Activated T-helper 2 cell treated with anti-CD3 and anti-CD28 coated beads, Interferon-gamma antibody, Interleukin-2, Interleukin-4, amounts not matched to agents 10 μg/mL and 5 μg/mL and 100 μg/mL, durations not matched to agents 14 hours and 24 hours and 36 hours (primary cell): ENCODE measurements at regions of chr11 and their contacts with region 1.

Region 1: GRCh38 chr11:9757809-9758636 is 94.1 kb downstream of the SWAP70 start:
- DNase-seq: peak; percentile 87
- H3K4me3 Mint-ChIP-seq: peak overlapping the region; percentile 73
- H3K27ac Mint-ChIP-seq: peak overlapping the region; percentile 89
- H3K4me1 Mint-ChIP-seq: peaks cover 40% of the 10 kb centered on the region
- H3K27me3 Mint-ChIP-seq: no peaks in the 10 kb centered on the region

Region 2: DNA sequence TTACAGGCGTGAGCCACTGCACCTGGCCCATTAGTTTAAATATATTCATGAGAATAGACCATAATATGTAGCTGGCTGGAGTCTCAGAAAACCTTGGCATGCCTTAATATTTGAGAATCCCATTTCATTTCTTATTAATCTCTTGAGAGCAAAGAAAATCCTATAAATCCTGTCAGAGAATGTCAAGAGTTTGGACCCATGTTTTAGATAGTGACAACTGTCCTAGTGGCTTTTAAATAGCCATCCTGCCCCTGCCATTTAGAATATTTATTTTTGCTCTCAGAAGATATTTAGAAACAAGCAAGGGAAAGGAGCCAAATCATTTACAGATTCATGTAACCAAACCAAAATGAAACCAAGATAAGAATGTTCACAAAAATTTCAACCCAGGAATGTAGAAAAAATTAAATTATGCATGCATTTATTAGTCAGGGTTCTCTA is 13.1 kb after region 1 on chr11:
- intact Hi-C with region 1: no loop called
- DNase-seq: no peak
- H3K4me3 Mint-ChIP-seq: no peak overlapping the region
- H3K27ac Mint-ChIP-seq: no peak overlapping the region
- H3K4me1 Mint-ChIP-seq: peaks cover 9% of the 10 kb centered on the region
- H3K27me3 Mint-ChIP-seq: no peaks in the 10 kb centered on the region

Region 3: GRCh38 chr11:9840460-9841004 is 82.5 kb after region 1 on chr11:
- intact Hi-C with region 1: loop called (anchors 1 kb)
- DNase-seq: no peak
- H3K4me3 Mint-ChIP-seq: no peak overlapping the region
- H3K27ac Mint-ChIP-seq: peak overlapping the region; percentile 3
- H3K4me1 Mint-ChIP-seq: peaks cover 38% of the 10 kb centered on the region
- H3K27me3 Mint-ChIP-seq: no peaks in the 10 kb centered on the region

Region 4: GRCh38 chr11:9861860-9862725 is 104.1 kb after region 1 on chr11:
- intact Hi-C with region 1: loop called (anchors 1 kb)
- DNase-seq: peak; percentile 20
- H3K4me3 Mint-ChIP-seq: no peak overlapping the region
- H3K27ac Mint-ChIP-seq: no peak overlapping the region
- H3K4me1 Mint-ChIP-seq: peaks cover 32% of the 10 kb centered on the region
- H3K27me3 Mint-ChIP-seq: peaks cover 4% of the 10 kb centered on the region

Region 5: GRCh38 chr11:9972989-9973388 is 215.0 kb after region 1 on chr11:
- intact Hi-C with region 1: loop called (anchors 1 kb)
- DNase-seq: no peak
- H3K4me3 Mint-ChIP-seq: no peak overlapping the region
- H3K27ac Mint-ChIP-seq: no peak overlapping the region
- H3K4me1 Mint-ChIP-seq: peaks cover 2% of the 10 kb centered on the region
- H3K27me3 Mint-ChIP-seq: no peaks in the 10 kb centered on the region

Region 6: DNA sequence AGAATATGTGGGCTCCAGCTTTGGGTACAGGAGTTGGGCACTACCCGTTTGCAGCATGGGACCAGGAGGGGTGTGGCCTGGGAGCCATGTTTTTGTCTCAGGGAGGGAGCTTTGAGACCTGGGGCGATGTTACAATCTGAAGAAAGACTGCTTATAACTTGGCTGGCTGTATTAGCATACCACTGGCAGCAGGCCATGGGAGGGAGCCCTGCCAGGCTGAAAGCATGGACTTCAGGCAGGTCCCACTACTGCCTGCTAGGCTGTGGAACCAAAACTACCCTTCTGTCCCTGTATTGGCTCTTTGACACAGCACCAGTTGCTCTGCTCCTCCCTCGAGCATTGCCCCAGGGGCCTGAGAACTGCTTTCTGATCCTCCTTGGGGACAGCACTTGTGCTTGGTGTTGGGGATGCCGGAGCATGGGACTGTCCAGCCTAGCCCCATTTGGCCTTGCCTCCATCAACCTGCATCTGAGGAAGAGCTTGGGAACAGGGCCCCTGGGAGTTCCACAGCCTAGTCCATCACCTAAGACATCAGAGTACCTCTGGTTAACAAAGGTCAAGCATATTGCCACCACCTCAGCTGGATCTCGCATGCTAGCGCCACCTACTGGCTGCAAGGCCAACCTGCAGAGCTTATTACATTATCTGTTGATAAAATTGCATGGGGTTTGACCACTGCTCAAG is 318.6 kb after region 1 on chr11:
- intact Hi-C with region 1: loop called (anchors 2 kb)
- DNase-seq: peak; percentile 12
- H3K4me3 Mint-ChIP-seq: no peak overlapping the region
- H3K27ac Mint-ChIP-seq: no peak overlapping the region
- H3K4me1 Mint-ChIP-seq: no peaks in the 10 kb centered on the region
- H3K27me3 Mint-ChIP-seq: peaks cover 2% of the 10 kb centered on the region

Region 7: GRCh38 chr11:10208131-10208575 is 450.1 kb after region 1 on chr11:
- intact Hi-C with region 1: loop called (anchors 5 kb)
- DNase-seq: no peak
- H3K4me3 Mint-ChIP-seq: no peak overlapping the region
- H3K27ac Mint-ChIP-seq: no peak overlapping the region
- H3K4me1 Mint-ChIP-seq: no peaks in the 10 kb centered on the region
- H3K27me3 Mint-ChIP-seq: peaks cover 21% of the 10 kb centered on the region

Region 8: GRCh38 chr11:10322830-10323792 is 565.1 kb after region 1 on chr11:
- intact Hi-C with region 1: loop called (anchors 1 kb)
- DNase-seq: peak; percentile 31
- H3K4me3 Mint-ChIP-seq: no peak overlapping the region
- H3K27ac Mint-ChIP-seq: peak overlapping the region; percentile 86
- H3K4me1 Mint-ChIP-seq: peaks cover 16% of the 10 kb centered on the region
- H3K27me3 Mint-ChIP-seq: peaks cover 27% of the 10 kb centered on the region